Dendritic cell treated with granulocyte-macrophage colony-stimulating factor and Interleukin-4, amounts not matched to agents 40 ng/mL and 50 ng/mL, for 4 days (primary cell): ENCODE measurements at regions of chr2 and their contacts with region 1.

Region 1: DNA sequence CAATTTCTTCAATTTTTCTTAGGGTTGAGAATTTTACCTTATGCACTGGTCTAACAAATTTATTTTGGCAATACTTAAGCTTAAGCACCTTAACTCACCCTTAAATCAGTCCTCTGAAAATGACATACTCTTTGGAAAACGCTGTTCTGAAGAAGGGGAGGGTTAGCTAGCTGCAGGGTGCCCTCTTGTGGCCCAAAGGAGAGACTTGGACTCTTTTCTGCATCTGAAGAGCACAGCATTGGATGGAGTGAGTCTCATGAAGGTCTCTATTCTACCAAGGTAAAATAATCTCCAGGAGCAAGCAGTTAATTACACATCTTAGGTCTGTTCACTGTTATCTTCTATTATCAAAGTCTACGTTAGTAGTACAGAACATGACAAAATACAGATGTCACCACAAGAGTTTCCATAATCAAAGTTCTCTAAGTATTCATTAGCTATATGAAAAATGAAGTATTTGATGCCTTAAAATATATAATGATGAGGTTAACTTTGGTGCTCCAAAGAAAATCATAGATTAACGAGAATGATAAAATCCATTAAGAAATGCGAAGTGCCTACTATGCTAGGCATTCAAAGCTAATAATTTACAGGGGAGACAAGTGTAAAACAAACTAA is 24.4 kb downstream of the PUM2 start:
- H3K4me3 Mint-ChIP-seq: no peak overlapping the region
- H3K27ac Mint-ChIP-seq: no peak overlapping the region
- H3K4me1 Mint-ChIP-seq: peaks cover 57% of the 10 kb centered on the region
- H3K27me3 Mint-ChIP-seq: no peaks in the 10 kb centered on the region

Region 2: GRCh38 chr2:19863303-19864041 is 462.8 kb before region 1 on chr2:
- intact Hi-C with region 1: no loop called
- H3K4me3 Mint-ChIP-seq: no peak overlapping the region
- H3K27ac Mint-ChIP-seq: no peak overlapping the region
- H3K4me1 Mint-ChIP-seq: peaks cover 7% of the 10 kb centered on the region
- H3K27me3 Mint-ChIP-seq: peaks cover 17% of the 10 kb centered on the region

Region 3: GRCh38 chr2:20273045-20273444 is 53.2 kb before region 1 on chr2:
- intact Hi-C with region 1: no loop called
- H3K4me3 Mint-ChIP-seq: no peak overlapping the region
- H3K27ac Mint-ChIP-seq: no peak overlapping the region
- H3K4me1 Mint-ChIP-seq: no peaks in the 10 kb centered on the region
- H3K27me3 Mint-ChIP-seq: no peaks in the 10 kb centered on the region

Region 4: DNA sequence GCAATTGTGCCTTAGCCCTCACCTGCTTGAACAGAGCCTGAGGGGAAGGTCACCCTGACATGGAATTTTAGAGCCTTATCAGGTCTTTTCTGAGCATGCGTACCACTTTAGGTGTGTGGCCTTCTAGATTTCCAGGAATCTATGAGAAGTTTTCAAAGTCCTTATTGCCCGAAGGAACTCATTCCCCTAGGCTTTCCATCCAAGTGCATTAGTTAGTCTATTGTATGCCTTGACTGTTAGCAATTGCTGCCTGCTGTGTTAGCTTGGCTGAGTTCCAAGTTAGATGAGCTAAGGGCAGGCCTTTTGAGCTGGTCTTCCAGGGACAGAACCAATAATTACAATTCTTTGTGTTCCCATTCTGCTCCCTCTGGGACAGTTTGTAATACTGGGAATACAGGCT is 55.2 kb after region 1 on chr2:
- intact Hi-C with region 1: loop called (anchors 2 kb)
- H3K4me3 Mint-ChIP-seq: no peak overlapping the region
- H3K27ac Mint-ChIP-seq: no peak overlapping the region
- H3K4me1 Mint-ChIP-seq: peaks cover 10% of the 10 kb centered on the region
- H3K27me3 Mint-ChIP-seq: peaks cover 12% of the 10 kb centered on the region